ENCODE measurements at regions of chr5 and their contacts with region 1.

Region 1: DNA sequence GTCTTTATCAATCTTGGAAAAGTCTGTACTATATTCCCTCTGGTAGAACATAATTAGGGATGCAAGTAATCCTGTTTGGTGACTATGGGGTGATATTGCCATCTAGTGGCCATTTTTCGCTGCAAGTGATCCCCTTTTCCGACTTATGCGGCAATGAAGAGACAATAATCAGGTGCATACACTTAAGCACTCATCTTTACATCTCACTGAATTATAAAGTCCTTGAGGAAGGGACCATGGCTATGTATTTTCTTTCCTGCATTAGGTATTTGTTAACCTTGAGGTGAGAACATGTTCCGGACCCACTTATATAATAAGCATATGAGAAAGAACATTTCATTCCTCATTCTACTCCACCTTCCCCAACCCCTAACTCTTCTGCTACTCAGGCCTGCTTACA is 19.6 kb upstream of the LIX1 start:
- DNase-seq: peak in 4 of 10 donors; percentile 55 to 74 (median 72)
- H3K4me3 ChIP-seq: no peak overlapping the region
- H3K27ac ChIP-seq: peak overlapping the region in 15 of 59 donors; percentile 0 to 53 (median 20)
- H3K27me3 ChIP-seq: no peaks in the 10 kb centered on the region
- CTCF ChIP-seq: peak; percentile 82 to 98 (median 93)

Region 2: GRCh38 chr5:96344678-96345577 is 817.1 kb before region 1 on chr5:
- intact Hi-C with region 1: loop called in 1 of 2 experiments (anchors 5 kb)
- DNase-seq: no peak
- H3K4me3 ChIP-seq: no peak overlapping the region
- H3K27ac ChIP-seq: no peak overlapping the region
- H3K27me3 ChIP-seq: no peaks in the 10 kb centered on the region
- CTCF ChIP-seq: peak in 54 of 56 donors; percentile 45 to 84 (median 64)

Region 3: DNA sequence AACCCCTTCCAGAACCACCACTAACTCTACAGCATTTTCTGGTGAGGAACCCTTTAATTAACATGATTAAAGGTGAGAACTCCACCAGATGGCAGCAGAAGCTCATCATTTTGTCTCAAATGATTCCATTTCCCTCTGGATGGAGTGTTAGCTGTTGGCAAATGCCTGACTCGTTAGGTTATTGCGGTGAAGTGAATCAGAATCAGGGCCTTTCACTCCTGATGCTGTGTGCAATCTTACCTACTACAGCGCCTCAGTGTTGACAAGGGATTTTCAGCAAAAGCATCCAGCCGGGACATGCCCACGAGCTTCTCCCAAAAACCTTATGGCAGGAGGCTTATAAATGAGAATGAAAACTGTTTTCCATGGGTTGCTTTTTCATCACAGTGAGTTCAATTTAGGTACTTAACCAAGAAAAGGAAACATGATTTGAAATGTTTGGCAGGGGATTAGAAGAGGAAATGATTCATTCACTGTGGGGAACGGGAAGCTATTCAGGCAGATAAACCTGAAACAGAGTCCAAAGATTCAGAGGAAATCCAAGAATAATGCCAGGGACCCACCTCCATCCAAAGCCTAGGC is 547.8 kb before region 1 on chr5:
- intact Hi-C with region 1: loop called (anchors 5 to 10 kb)
- DNase-seq: peak in 5 of 10 donors; percentile 40 to 70 (median 43)
- H3K4me3 ChIP-seq: peak overlapping the region in 31 of 59 donors; percentile 3 to 50 (median 27)
- H3K27ac ChIP-seq: peak overlapping the region in 42 of 59 donors; percentile 0 to 80 (median 48)
- H3K27me3 ChIP-seq: no peaks in the 10 kb centered on the region
- CTCF ChIP-seq: peak in 55 of 56 donors; percentile 63 to 96 (median 79)

Region 4: GRCh38 chr5:96752341-96753016 is 409.6 kb before region 1 on chr5:
- intact Hi-C with region 1: loop called (anchors 2 kb)
- DNase-seq: peak in 1 of 10 donors; percentile 39
- H3K4me3 ChIP-seq: no peak overlapping the region
- H3K27ac ChIP-seq: peak overlapping the region in 30 of 59 donors; percentile 9 to 72 (median 46)
- H3K27me3 ChIP-seq: no peaks in the 10 kb centered on the region
- CTCF ChIP-seq: peak; percentile 61 to 93 (median 78)

Region 5: DNA sequence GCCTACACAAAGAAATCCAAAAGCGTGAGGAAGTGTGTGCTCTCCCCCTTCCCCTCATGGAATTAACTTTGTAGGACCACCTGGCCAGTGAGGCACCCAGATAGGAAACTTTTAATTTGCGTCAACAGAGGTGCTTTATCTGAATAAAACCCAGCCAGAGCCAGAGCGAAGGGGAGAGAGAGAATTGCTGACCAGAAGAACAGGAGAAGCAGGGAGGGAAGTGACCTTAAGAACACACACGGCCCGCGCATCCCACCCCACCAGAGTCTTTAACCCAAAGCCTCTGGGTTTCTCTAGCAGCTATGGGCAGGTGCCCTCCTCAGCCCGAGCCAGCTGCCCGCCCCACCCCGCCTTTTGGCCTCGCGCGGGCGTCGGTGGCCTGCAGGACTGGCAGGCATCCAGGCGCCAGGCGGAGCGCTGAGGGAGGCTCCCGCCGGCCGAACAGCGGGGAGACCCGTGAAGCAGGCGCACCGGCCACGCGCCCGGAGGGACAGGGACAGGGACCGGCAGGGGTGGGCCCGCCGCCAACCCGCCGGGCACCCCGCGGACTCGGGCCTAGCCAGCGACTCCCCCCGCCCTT is 354.9 kb before region 1 on chr5:
- intact Hi-C with region 1: loop called in 1 of 2 experiments (anchors 5 kb)
- DNase-seq: peak; percentile 51 to 87 (median 72)
- H3K4me3 ChIP-seq: peak overlapping the region; percentile 50 to 96 (median 84)
- H3K27ac ChIP-seq: peak overlapping the region; percentile 93 to 100 (median 99)
- H3K27me3 ChIP-seq: no peaks in the 10 kb centered on the region
- CTCF ChIP-seq: peak in 17 of 56 donors; percentile 8 to 40 (median 19)

Region 6: GRCh38 chr5:96868603-96869371 is 293.3 kb before region 1 on chr5:
- intact Hi-C with region 1: loop called (anchors 2 to 5 kb)
- DNase-seq: peak in 1 of 10 donors; percentile 17
- H3K4me3 ChIP-seq: peak overlapping the region in 1 of 59 donors; percentile 9
- H3K27ac ChIP-seq: no peak overlapping the region
- H3K27me3 ChIP-seq: no peaks in the 10 kb centered on the region
- CTCF ChIP-seq: peak; percentile 50 to 95 (median 87)

Region 7: DNA sequence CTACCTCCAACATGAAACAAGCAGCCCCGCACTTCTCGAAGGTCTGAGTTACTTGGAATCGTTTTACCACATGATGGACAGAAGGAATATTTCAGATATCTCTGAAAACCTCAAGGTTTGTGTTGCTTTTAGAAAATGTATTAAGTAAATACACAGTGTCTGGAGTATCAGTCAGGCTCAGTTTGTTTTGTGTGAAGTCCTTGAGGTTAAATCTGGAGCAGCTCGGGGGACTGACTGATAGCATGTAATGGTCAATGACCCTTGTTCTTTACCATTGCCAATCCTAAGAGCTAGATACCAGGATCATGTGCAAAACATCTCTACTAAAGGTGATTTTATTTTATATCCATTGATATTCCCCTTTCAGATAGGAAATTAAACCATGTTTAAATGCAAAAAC is 253.0 kb before region 1 on chr5:
- intact Hi-C with region 1: no loop called
- DNase-seq: no peak
- H3K4me3 ChIP-seq: no peak overlapping the region
- H3K27ac ChIP-seq: no peak overlapping the region
- H3K27me3 ChIP-seq: no peaks in the 10 kb centered on the region
- CTCF ChIP-seq: no peak

Region 8: GRCh38 chr5:96997265-96997859 is 164.7 kb before region 1 on chr5:
- intact Hi-C with region 1: loop called (anchors 5 to 10 kb)
- DNase-seq: no peak
- H3K4me3 ChIP-seq: no peak overlapping the region
- H3K27ac ChIP-seq: no peak overlapping the region
- H3K27me3 ChIP-seq: no peaks in the 10 kb centered on the region
- CTCF ChIP-seq: peak in 54 of 56 donors; percentile 22 to 79 (median 60)

Region 9: GRCh38 chr5:97111616-97112015 is 50.4 kb before region 1 on chr5:
- intact Hi-C with region 1: no loop called
- DNase-seq: no peak
- H3K4me3 ChIP-seq: peak overlapping the region in 1 of 59 donors; percentile 6
- H3K27ac ChIP-seq: no peak overlapping the region
- H3K27me3 ChIP-seq: no peaks in the 10 kb centered on the region
- CTCF ChIP-seq: no peak